ENCODE measurements at regions of chr10 and their contacts with region 1.

Region 1: DNA sequence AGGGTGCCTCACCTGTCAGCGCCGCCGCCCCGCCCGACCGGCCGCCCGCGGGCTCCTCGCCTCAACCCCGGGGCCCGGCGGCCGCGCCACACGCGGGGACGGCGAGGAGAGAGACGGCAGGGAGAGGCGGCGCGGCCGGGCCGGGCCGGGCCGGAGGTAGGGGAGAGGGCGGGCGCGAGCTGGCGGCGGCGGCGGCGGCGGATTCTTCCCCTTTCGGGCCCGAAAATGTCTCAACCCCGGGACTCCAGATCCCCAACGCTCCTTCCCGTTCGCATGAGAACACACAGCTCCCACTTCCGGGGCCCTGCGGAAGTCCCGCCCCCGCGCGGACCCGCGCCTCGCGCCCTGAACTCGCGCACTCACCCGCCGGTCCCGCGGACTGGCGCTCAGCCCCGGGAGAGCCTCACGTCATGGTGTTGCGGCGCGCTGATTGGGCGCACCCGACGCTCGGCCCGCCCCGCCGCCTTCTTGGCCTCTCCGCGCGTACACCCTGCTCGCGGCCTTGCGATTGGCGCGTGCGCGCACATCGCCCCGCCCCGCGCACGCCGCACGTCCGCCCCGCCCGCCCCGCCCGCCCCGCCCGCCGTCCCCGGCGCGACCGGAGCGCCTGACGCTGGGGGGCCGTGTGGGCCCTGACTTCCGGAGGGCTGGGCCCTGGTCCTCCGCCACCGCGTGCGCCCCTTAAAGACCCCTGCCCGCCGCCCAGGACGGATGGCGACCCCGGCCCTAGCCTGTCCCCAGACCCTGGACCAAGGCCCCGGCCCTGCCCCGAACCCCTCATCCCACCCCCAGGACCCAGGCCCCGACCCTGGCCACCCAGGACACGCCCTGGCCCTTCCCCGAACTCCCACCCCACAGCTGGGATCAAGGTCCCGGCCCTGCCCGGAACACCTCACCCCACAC is at the start of gene LARP4B:
- DNase-seq: peak; percentile 95 to 98 (median 97)
- H3K4me3 ChIP-seq: peak within 1 kb of the TSS; percentile 85
- H3K27ac ChIP-seq: peak within 1 kb of the TSS; percentile 95 to 96
- H3K4me1 ChIP-seq: peaks cover 9% of the 10 kb centered on the region
- H3K27me3 ChIP-seq: no peaks in the 10 kb centered on the region
- CTCF ChIP-seq: no peak
- EP300 ChIP-seq: peak; percentile 32
- POLR2A ChIP-seq: peak; percentile 36
- total RNA-seq, gene LARP4B: 32.9 to 77.8 (median 56.2) TPM

Region 2: DNA sequence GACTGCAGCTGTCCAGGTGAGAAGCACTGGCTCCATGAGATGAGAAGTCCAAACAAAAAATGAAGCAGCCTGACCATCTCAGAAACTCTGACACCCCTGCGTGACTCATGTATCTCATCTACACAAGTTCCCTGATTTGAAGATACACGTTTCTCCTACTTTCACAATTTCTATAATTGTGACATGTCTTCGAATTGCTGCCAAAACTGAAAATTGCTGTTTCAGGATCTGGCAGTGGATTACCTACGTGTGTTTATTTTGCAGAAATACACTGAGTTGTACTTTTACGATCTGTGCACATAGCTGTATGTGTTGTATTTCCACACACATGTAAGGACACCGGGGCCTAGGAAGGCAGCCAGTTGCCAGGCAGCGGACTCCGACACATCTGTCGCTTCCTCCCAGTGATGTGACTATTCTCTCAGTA is 53.3 kb before region 1 on chr10:
- intact Hi-C with region 1: no loop called
- DNase-seq: no peak
- H3K4me3 ChIP-seq: no peak overlapping the region
- H3K27ac ChIP-seq: no peak overlapping the region
- H3K4me1 ChIP-seq: no peaks in the 10 kb centered on the region
- H3K27me3 ChIP-seq: no peaks in the 10 kb centered on the region
- CTCF ChIP-seq: no peak
- EP300 ChIP-seq: no peak
- POLR2A ChIP-seq: no peak

Region 3: DNA sequence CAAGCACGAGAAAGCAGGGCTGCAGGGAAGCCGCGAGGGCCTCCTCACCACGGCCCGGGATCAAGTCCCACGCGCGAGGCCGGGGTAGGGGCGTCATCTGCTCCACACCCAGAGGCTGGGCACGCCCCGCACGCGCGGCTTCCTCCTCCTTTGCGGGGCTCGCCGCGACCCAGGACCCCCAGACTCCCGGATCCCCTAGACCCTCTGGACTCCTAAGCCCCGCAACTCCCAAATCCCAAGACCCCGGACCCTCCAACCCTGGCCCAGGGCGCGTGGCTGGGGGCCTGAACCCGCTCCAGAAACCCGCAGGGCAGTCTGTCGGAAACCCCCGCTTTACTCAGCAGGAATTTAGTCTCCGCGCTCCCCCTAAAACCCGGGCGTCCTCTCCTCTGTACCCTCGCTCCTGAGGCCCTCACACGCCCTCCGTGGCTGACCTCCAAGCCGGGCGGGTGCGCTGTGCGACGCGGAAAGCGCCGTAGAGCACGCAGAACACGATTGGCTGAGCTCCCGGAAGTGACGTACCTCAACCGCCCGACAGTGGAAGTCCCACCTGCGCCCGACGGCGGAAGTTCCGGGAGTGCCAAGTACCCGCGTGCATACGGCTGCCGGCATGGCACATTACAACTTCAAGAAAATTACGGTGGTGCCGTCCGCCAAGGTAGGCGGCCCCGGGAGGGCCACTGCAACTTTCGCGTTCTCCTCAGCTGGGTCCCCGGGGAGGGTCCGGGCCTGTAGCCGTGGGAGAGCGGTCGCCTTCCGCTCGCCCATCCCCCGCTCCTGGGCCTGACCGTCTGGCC is 56.4 kb after region 1 on chr10 and contains the start of gene GTPBP4:
- intact Hi-C with region 1: loop called in 1 of 4 experiments (anchors 5 kb)
- DNase-seq: peak; percentile 98 to 99 (median 99)
- H3K4me3 ChIP-seq: peak within 1 kb of the TSS; percentile 86
- H3K27ac ChIP-seq: peak within 1 kb of the TSS; percentile 43 to 89
- H3K4me1 ChIP-seq: peaks cover 12% of the 10 kb centered on the region
- H3K27me3 ChIP-seq: no peaks in the 10 kb centered on the region
- CTCF ChIP-seq: no peak
- EP300 ChIP-seq: peak; percentile 19
- POLR2A ChIP-seq: peak; percentile 62
- total RNA-seq, gene GTPBP4: 17.9 to 44.7 (median 30.5) TPM

Region 4: GRCh38 chr10:1022413-1022812 is 90.7 kb after region 1 on chr10:
- intact Hi-C with region 1: no loop called
- DNase-seq: no peak
- H3K4me3 ChIP-seq: no peak overlapping the region
- H3K27ac ChIP-seq: no peak overlapping the region
- H3K4me1 ChIP-seq: no peaks in the 10 kb centered on the region
- H3K27me3 ChIP-seq: no peaks in the 10 kb centered on the region
- CTCF ChIP-seq: no peak
- EP300 ChIP-seq: no peak
- POLR2A ChIP-seq: no peak

Region 5: GRCh38 chr10:1048732-1049424 is 117.2 kb after region 1 on chr10 and contains the start of gene IDI1:
- intact Hi-C with region 1: loop called in 2 of 4 experiments (anchors 2 to 10 kb)
- DNase-seq: peak; percentile 96 to 98 (median 97)
- H3K4me3 ChIP-seq: peak within 1 kb of the TSS; percentile 94
- H3K27ac ChIP-seq: peak within 1 kb of the TSS; percentile 93 to 100
- H3K4me1 ChIP-seq: peaks cover 10% of the 10 kb centered on the region
- H3K27me3 ChIP-seq: no peaks in the 10 kb centered on the region
- CTCF ChIP-seq: peak in 1 of 3 donors; percentile 13
- EP300 ChIP-seq: peak; percentile 26
- POLR2A ChIP-seq: peak; percentile 85
- total RNA-seq, gene IDI1: 17.3 to 99.0 (median 24.4) TPM

Region 6: DNA sequence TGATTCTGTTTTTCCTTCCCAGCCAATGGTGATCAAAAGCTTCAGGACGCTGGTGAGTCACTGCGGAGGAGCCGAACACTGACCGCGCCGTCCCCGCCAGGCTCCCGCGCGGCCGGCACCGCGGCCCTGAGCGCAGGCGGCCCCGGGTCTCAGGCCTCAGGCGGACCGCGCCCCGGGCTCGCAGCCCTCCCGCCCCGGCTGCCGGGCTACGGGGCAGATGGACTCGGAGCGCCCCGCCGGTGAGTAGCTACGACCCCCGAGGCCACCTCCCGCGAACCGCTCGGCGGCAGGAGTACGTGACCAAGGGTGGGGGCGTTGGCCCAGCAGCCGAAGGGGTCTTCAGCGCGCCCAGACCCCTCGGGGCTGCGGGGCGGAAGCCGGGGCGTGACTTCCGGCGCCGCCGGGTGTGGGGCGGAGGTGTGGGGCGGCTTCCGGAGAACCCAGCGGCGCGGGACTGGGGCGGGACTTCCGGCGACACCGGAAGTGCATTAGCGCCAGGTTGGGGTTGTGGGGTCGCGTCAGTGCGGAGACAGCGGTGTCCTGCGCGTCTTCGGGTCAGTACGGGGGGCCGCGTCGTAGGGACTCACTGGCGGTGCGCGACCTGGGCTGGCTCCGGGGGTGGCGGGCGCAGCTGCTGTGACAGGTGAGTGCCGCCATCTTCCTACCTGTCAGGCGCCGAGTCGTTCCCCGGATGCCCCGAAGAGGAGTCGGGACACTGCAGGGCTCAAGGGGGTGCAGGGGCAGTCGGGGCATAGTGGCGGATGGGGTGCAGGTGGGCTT is 124.8 kb after region 1 on chr10 and contains the start of gene WDR37:
- intact Hi-C with region 1: loop called in 1 of 4 experiments (anchors 10 kb)
- DNase-seq: peak; percentile 83 to 93 (median 89)
- H3K4me3 ChIP-seq: peak within 1 kb of the TSS; percentile 69
- H3K27ac ChIP-seq: peak within 1 kb of the TSS; percentile 92 to 93
- H3K4me1 ChIP-seq: peaks cover 9% of the 10 kb centered on the region
- H3K27me3 ChIP-seq: no peaks in the 10 kb centered on the region
- CTCF ChIP-seq: no peak
- EP300 ChIP-seq: no peak
- POLR2A ChIP-seq: peak; percentile 66
- total RNA-seq, gene WDR37: 7.6 to 20.0 (median 15.6) TPM